Activated CD4-positive, alpha-beta memory T cell treated with anti-CD3 and anti-CD28 coated beads for 36 hours (primary cell): ENCODE measurements at regions of chr3 and their contacts with region 1.

Region 1: DNA sequence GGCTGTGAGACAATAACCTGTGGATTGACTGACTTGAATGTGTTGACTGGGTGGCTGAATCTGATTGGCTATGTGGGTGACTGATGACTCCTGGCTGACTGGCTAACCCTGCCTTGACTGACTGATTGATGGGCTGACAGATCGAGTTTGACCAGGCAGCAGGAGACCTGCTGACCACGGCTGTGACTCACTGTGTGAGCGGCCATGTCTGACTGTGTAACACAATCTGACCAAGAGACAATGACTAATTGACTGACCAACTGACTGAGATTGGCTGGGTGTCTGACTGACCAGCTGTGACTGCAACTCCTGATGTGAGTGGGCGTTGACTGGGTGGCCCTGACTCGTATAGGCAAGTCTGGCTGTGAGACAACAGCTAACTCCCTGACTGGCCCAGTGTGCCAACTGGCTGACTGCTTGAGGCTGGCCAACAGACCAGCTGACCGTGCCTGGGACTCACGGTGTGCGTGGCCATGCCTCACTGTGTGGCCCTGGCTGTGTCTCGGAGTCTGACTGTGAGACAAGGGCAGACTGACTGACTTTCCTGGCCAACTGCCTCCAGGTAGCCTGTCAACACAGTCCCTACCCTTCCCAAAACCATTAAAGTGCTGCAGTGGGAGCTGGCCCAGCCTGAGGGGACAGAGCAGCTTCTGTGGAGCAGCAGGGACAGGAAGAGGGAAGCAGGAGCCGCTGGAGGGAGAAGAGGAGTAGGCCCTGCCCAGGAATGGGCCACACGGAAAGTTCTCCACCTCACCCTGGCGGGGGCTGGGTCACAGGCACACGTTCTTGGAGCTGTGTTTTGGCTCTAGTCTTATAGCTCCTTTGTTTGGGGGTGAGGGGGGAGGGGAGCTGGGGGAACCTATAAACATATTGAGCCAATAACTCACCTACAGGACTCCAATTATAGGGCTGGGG is 508.9 kb downstream of the SHQ1 start:
- DNase-seq: no peak
- H3K4me3 Mint-ChIP-seq: no peak overlapping the region
- H3K27ac Mint-ChIP-seq: no peak overlapping the region
- H3K4me1 Mint-ChIP-seq: peaks cover 27% of the 10 kb centered on the region
- H3K27me3 Mint-ChIP-seq: no peaks in the 10 kb centered on the region

Region 2: GRCh38 chr3:71805199-71805598 is 534.2 kb before region 1 on chr3:
- CTCF ChIA-PET with region 1: no interaction called
- POLR2A ChIA-PET with region 1: no interaction called
- intact Hi-C with region 1: no loop called
- DNase-seq: no peak
- H3K4me3 Mint-ChIP-seq: no peak overlapping the region
- H3K27ac Mint-ChIP-seq: no peak overlapping the region
- H3K4me1 Mint-ChIP-seq: no peaks in the 10 kb centered on the region
- H3K27me3 Mint-ChIP-seq: peaks cover 5% of the 10 kb centered on the region

Region 3: GRCh38 chr3:71978150-71978721 is 361.1 kb before region 1 on chr3:
- CTCF ChIA-PET with region 1: no interaction called
- POLR2A ChIA-PET with region 1: interaction called, 5 read pairs
- intact Hi-C with region 1: loop called (anchors 2 kb)
- DNase-seq: peak; percentile 67
- H3K4me3 Mint-ChIP-seq: peak overlapping the region; percentile 38
- H3K27ac Mint-ChIP-seq: peak overlapping the region; percentile 88
- H3K4me1 Mint-ChIP-seq: peaks cover 44% of the 10 kb centered on the region
- H3K27me3 Mint-ChIP-seq: peaks cover 19% of the 10 kb centered on the region

Region 4: GRCh38 chr3:72353236-72354128 is 14.1 kb after region 1 on chr3:
- CTCF ChIA-PET with region 1: no interaction called
- POLR2A ChIA-PET with region 1: no interaction called
- intact Hi-C with region 1: no loop called
- DNase-seq: no peak
- H3K4me3 Mint-ChIP-seq: no peak overlapping the region
- H3K27ac Mint-ChIP-seq: no peak overlapping the region
- H3K4me1 Mint-ChIP-seq: no peaks in the 10 kb centered on the region
- H3K27me3 Mint-ChIP-seq: no peaks in the 10 kb centered on the region

Region 5: DNA sequence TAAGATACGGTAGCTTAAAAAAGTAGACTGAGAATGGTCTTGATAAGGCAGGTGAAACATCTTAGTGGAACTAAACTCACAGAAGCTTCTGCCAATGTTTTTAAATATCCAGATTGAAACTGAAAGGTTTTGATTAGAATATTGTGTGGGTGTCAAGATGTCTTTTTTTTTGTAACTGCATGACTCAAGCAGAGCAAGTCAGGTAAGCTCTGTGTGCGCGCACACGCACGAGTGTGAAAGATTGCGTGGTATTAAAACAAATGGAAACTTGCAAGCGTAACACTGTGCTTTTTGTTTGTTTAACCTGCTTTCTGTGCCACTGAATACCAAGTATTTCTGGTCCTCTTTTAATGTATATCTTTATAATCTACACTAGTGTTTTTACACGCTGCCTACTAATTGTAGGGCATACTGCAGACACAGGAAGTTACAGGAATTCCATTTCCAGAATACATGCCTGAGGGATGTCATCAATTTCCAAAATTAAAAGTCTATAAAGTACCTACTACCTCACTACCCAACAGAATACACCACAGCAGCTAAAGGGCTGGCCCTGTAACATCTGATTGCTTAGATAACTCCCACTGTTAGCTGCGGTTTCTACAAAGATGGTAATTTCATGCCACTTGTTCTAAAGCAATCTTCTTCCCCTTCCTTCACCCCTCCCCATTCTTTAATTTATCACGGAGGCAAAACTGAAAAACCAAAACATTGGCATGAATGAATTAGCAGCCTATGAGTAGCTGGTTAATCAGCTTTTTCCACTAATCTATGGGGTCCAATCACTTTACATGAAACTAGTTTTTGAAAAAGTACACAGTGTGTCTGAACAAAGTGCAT is 36.1 kb after region 1 on chr3:
- CTCF ChIA-PET with region 1: interaction called, 3 read pairs
- POLR2A ChIA-PET with region 1: interaction called, 8 read pairs
- intact Hi-C with region 1: loop called (anchors 1 kb)
- DNase-seq: peak; percentile 70
- H3K4me3 Mint-ChIP-seq: peak overlapping the region; percentile 6
- H3K27ac Mint-ChIP-seq: peak overlapping the region; percentile 86
- H3K4me1 Mint-ChIP-seq: peaks cover 65% of the 10 kb centered on the region
- H3K27me3 Mint-ChIP-seq: no peaks in the 10 kb centered on the region

Region 6: DNA sequence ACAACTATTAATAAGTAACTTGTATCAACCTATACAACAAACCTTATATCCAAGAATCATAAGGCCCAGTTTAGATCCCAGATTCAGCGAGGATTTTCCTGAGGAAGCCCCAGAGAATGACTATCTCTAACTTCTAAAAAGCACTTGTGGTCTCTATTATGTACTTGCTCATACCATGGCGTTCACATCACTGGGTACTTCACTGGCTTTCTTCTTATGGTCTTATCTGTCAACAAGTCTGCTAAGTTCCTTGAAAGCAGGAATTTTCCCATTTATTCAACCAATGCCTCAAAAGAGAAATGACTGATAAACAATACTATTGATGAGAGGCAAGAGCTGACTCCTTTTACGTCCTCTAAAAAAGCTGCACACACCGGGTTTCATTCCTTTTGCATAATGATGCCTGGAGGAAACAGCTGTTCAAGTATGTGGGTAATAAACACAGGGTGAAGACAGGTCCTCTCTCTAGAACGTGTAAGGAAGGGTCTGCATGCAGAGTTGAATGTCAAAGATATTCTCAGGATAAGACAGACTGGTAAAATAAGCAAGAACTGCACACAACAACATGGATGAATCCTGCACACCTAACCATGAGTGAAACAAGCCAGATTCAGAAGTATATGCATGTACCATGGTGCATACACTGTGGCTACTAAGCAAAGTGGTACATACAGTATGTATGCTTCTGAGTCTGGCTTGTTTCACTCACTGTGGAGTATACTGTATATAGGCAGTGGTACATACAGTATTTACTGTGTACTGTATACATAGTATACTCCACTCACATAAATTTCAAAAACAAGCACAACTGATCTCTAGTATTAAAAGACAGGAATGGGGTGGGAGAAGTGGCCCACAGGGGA is 100.2 kb after region 1 on chr3:
- CTCF ChIA-PET with region 1: no interaction called
- POLR2A ChIA-PET with region 1: no interaction called
- intact Hi-C with region 1: loop called (anchors 2 kb)
- DNase-seq: no peak
- H3K4me3 Mint-ChIP-seq: no peak overlapping the region
- H3K27ac Mint-ChIP-seq: no peak overlapping the region
- H3K4me1 Mint-ChIP-seq: peaks cover 88% of the 10 kb centered on the region
- H3K27me3 Mint-ChIP-seq: no peaks in the 10 kb centered on the region

Region 7: DNA sequence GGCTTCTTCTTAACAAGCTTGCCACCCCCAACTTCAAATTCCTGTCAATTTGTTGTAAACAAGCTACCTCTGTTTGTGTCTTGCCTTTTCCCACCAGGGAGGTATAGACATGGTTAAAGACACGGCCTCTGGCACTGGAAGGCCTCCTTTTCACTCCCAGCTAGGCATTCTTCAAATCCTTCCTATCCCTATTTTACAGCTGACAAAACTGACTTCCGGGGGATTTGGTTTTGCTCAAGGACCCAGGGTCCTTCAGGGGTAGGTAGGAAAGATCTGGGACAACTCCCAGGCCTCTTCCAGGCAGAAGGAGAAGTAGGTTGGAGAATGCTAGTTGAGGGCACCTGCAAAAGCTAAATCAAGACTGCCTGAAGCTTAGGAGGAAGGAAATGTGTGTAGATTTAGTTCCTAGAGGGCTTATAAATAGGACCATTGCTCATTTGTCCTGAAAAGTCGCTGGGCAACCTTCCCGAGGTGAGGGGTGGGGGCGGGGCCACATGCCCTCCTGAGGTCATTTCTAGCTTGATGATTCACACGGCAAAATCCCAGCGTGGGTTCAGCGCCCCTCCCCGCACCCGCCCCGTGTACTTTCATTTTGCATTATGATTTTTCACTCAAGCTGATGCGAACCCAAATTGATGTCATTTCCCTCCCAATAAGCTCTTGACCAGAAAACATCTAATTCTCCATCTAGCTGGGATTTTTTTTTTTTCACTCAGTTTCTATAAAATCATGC is 143.4 kb after region 1 on chr3:
- CTCF ChIA-PET with region 1: no interaction called
- POLR2A ChIA-PET with region 1: no interaction called
- intact Hi-C with region 1: loop called (anchors 1 kb)
- DNase-seq: peak; percentile 95
- H3K4me3 Mint-ChIP-seq: peak overlapping the region; percentile 42
- H3K27ac Mint-ChIP-seq: peak overlapping the region; percentile 91
- H3K4me1 Mint-ChIP-seq: peaks cover 79% of the 10 kb centered on the region
- H3K27me3 Mint-ChIP-seq: no peaks in the 10 kb centered on the region